CD8-positive, alpha-beta T cell (primary cell): ENCODE measurements at regions of chrX and their contacts with region 1.

Region 1: DNA sequence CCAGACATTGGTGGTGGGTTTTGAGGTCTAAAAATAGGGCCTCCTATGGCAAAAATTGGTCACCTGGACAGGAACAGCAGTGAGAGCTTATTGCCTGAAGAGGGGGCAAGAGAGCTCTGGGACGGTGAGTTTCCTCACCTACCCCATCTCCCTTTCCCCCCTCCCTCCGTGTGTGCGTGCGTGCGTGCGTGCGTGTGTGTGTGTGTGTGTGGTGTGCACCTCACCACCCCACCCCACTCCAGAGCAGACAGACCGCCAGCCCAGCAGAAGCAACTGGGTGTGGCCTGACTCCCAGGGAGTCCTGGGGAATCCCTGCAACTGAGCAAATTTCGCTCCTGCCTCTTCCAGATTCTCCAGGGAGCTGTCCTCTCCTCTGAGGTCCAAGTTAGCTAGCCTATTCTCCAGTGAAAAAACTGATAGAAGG is 44.7 kb downstream of the PRPS1 start:
- DNase-seq: peak; percentile 60 to 94 (median 84)
- ATAC-seq: peak; percentile 59
- H3K4me3 ChIP-seq: peak overlapping the region; percentile 10 to 13
- H3K4me3 Mint-ChIP-seq: peak overlapping the region; percentile 67
- H3K27ac ChIP-seq: peak overlapping the region; percentile 97 to 98
- H3K27ac Mint-ChIP-seq: peak overlapping the region; percentile 99
- H3K4me1 ChIP-seq: peaks cover 41% of the 10 kb centered on the region
- H3K4me1 Mint-ChIP-seq: peaks cover 47% of the 10 kb centered on the region
- H3K27me3 ChIP-seq: no peaks in the 10 kb centered on the region
- H3K27me3 Mint-ChIP-seq: no peaks in the 10 kb centered on the region
- CTCF ChIP-seq: peak; percentile 52

Region 2: GRCh38 chrX:107348051-107348450 is 324.9 kb before region 1 on chrX:
- CTCF ChIA-PET with region 1: no interaction called
- POLR2A ChIA-PET with region 1: no interaction called
- intact Hi-C with region 1: no loop called
- DNase-seq: no peak
- ATAC-seq: no peak
- H3K4me3 ChIP-seq: no peak overlapping the region
- H3K4me3 Mint-ChIP-seq: no peak overlapping the region
- H3K27ac ChIP-seq: no peak overlapping the region
- H3K27ac Mint-ChIP-seq: no peak overlapping the region
- H3K4me1 ChIP-seq: no peaks in the 10 kb centered on the region
- H3K4me1 Mint-ChIP-seq: no peaks in the 10 kb centered on the region
- H3K27me3 ChIP-seq: no peaks in the 10 kb centered on the region
- H3K27me3 Mint-ChIP-seq: peaks cover 11% of the 10 kb centered on the region
- CTCF ChIP-seq: no peak

Region 3: DNA sequence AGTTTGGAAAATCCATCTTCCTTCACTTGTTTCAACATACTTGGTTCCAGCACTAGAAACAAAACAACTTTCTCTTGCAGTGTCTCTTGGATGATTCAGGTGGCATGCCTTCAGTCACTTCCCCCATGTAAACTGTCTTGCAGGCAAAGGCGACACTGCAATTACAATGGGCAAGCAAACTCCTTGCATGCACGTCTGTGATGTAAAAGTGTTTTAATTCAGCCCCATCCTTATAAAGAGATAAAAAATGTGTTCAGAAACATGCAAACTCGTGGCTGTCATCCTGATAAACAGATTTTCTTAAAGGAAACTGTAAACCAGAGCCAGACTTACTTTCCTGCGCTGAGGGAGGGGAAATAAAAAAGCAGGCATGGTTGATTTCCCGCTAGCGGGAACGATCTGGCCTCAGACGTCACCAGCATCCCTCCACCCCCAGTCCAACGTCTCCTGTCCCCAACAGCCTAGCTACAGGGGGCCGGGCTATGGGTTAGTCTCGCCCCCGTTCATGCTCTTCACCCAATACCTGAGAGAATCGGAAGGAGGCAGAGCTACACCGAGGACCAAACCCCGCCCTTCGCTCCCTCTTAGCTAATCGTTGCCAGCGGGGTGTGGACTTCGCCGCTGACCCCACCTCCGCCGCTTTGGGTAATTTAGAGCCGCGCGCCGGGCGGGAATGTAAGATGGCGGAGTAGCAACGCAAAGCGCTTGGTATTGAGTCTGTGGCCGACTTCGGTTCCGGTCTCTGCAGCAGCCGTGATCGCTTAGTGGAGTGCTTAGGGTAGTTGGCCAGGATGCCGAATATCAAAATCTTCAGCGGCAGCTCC is 44.9 kb before region 1 on chrX and contains the start of gene PRPS1:
- CTCF ChIA-PET with region 1: interaction called, 5 read pairs
- POLR2A ChIA-PET with region 1: interaction called, 12 read pairs
- intact Hi-C with region 1: loop called in 1 of 2 experiments (anchors 5 kb)
- DNase-seq: peak; percentile 76 to 95 (median 87)
- ATAC-seq: peak; percentile 96
- H3K4me3 ChIP-seq: peak within 1 kb of the TSS; percentile 81 to 95
- H3K4me3 Mint-ChIP-seq: peak within 1 kb of the TSS; percentile 87
- H3K27ac ChIP-seq: peak within 1 kb of the TSS; percentile 79 to 95
- H3K27ac Mint-ChIP-seq: peak within 1 kb of the TSS; percentile 93
- H3K4me1 ChIP-seq: peaks cover 8% of the 10 kb centered on the region
- H3K4me1 Mint-ChIP-seq: peaks cover 33% of the 10 kb centered on the region
- H3K27me3 ChIP-seq: no peaks in the 10 kb centered on the region
- H3K27me3 Mint-ChIP-seq: no peaks in the 10 kb centered on the region
- CTCF ChIP-seq: no peak
- total RNA-seq, gene PRPS1: 65.6 to 74.7 TPM

Region 4: GRCh38 chrX:107710617-107711391 is 37.8 kb after region 1 on chrX:
- CTCF ChIA-PET with region 1: interaction called, 278 read pairs
- POLR2A ChIA-PET with region 1: interaction called, 270 read pairs
- intact Hi-C with region 1: loop called (anchors 1 kb)
- DNase-seq: peak in 8 of 9 experiments; percentile 21 to 93 (median 66)
- ATAC-seq: peak; percentile 50
- H3K4me3 ChIP-seq: no peak overlapping the region
- H3K4me3 Mint-ChIP-seq: peak overlapping the region; percentile 71
- H3K27ac ChIP-seq: peak overlapping the region; percentile 100
- H3K27ac Mint-ChIP-seq: peak overlapping the region; percentile 99
- H3K4me1 ChIP-seq: peaks cover 48% of the 10 kb centered on the region
- H3K4me1 Mint-ChIP-seq: peaks cover 62% of the 10 kb centered on the region
- H3K27me3 ChIP-seq: no peaks in the 10 kb centered on the region
- H3K27me3 Mint-ChIP-seq: no peaks in the 10 kb centered on the region
- CTCF ChIP-seq: no peak

Region 5: GRCh38 chrX:107741404-107741790 is 68.4 kb after region 1 on chrX:
- CTCF ChIA-PET with region 1: interaction called, 27 read pairs
- POLR2A ChIA-PET with region 1: interaction called, 17 read pairs
- intact Hi-C with region 1: loop called (anchors 1 kb)
- DNase-seq: peak in 1 of 9 experiments; percentile 22
- ATAC-seq: peak; percentile 6
- H3K4me3 ChIP-seq: peak overlapping the region; percentile 29
- H3K4me3 Mint-ChIP-seq: peak overlapping the region; percentile 80
- H3K27ac ChIP-seq: peak overlapping the region; percentile 68 to 73
- H3K27ac Mint-ChIP-seq: peak overlapping the region; percentile 97
- H3K4me1 ChIP-seq: peaks cover 48% of the 10 kb centered on the region
- H3K4me1 Mint-ChIP-seq: peaks cover 44% of the 10 kb centered on the region
- H3K27me3 ChIP-seq: no peaks in the 10 kb centered on the region
- H3K27me3 Mint-ChIP-seq: no peaks in the 10 kb centered on the region
- CTCF ChIP-seq: no peak

Region 6: GRCh38 chrX:108020631-108021030 is 347.7 kb after region 1 on chrX:
- CTCF ChIA-PET with region 1: no interaction called
- POLR2A ChIA-PET with region 1: no interaction called
- intact Hi-C with region 1: loop called in 1 of 2 experiments (anchors 2 kb)
- DNase-seq: peak in 5 of 9 experiments; percentile 0 to 51 (median 28)
- ATAC-seq: no peak
- H3K4me3 ChIP-seq: peak overlapping the region in 1 of 2 experiments; percentile 17
- H3K4me3 Mint-ChIP-seq: peak overlapping the region; percentile 83
- H3K27ac ChIP-seq: peak overlapping the region; percentile 10 to 19
- H3K27ac Mint-ChIP-seq: peak overlapping the region; percentile 97
- H3K4me1 ChIP-seq: peaks cover 45% of the 10 kb centered on the region
- H3K4me1 Mint-ChIP-seq: peaks cover 70% of the 10 kb centered on the region
- H3K27me3 ChIP-seq: no peaks in the 10 kb centered on the region
- H3K27me3 Mint-ChIP-seq: no peaks in the 10 kb centered on the region
- CTCF ChIP-seq: no peak